ENCODE measurements at regions of chr6 and their contacts with region 1.

Region 1: DNA sequence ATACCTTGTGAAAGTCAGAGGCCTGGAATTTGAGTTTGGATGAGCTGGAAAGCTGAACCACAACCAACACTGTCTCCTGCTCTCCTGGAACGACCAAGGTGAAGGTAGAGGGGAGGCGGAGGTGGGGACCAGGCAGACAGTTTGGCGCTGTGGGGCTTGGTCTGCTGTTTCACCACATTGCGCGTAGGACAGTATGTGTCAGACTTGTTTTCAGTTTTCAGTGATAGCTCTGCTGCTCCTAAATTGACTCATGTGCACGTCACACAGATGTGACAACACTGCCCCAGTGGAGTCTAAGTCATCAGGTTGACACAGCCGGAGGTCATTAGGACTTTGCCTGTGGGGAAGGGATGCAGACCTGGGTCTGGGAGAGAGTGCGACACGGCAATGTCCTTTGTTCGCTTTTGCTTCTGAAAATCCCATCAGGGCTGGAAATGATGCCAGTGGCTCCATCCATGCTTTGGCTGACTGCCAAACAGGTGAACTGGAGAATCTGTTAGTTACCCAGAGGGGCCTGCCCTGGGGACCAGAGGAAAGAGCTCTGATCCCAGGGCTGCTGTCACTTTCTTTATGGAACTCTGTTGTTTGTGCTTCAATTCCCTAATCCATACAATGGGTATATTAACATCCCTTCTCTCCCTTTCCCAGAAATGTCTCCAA is 255.5 kb downstream of the CDC5L start:
- DNase-seq: peak; percentile 88
- H3K4me3 Mint-ChIP-seq: peak overlapping the region; percentile 33
- H3K27ac Mint-ChIP-seq: peak overlapping the region; percentile 96
- H3K4me1 Mint-ChIP-seq: peaks cover 39% of the 10 kb centered on the region
- H3K27me3 Mint-ChIP-seq: no peaks in the 10 kb centered on the region

Region 2: DNA sequence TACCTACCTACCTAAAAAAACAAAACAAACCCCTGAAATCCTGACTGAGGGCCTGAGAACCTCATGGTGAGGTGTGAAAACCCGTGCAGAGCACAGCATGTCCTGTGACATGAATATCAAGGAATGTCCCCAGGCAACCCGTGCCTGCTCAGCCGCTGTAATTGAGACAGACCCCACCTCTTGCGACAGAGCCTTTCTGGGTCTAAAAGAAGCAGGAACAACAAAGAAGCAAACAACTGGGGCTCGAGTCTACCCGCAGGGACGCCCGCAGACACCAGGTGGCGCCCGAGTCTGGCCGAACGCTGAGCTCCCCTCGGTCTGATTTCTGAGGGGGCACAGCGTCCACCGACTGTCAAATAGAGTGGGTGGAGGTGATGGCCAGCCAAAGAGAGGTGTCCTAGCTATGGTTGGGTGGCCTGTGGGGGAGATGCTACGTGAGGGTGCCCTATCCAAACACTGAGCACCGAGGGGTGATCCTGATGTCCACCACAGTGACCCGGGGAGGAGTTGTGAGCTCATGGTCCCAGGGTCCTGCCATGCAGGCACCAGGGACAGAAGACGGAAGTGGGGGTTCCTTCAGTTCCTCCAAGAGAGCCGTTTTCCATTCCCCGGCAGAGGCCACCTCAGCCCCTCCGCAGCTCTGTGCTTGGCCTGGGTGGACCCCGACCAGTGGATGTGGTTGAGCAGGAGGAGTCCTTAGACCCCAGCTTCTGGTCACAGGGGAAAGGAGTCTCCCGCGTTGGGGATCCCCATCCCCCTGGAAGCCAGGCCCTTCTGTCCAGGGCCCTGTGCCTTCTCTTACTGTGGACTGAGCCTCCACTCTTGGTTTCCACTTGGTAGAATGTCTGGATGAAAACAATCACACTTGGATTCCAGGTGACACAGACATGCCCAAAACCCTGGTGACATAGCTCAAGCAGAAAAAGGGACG is 12.7 kb after region 1 on chr6:
- CTCF ChIA-PET with region 1: interaction called, 25 read pairs
- POLR2A ChIA-PET with region 1: interaction called, 12 read pairs
- intact Hi-C with region 1: no loop called
- DNase-seq: peak; percentile 85
- H3K4me3 Mint-ChIP-seq: peak overlapping the region; percentile 24
- H3K27ac Mint-ChIP-seq: peak overlapping the region; percentile 76
- H3K4me1 Mint-ChIP-seq: peaks cover 9% of the 10 kb centered on the region
- H3K27me3 Mint-ChIP-seq: no peaks in the 10 kb centered on the region

Region 3: GRCh38 chr6:44925100-44925739 is 282.2 kb after region 1 on chr6:
- CTCF ChIA-PET with region 1: no interaction called
- POLR2A ChIA-PET with region 1: no interaction called
- intact Hi-C with region 1: loop called (anchors 5 kb)
- DNase-seq: no peak
- H3K4me3 Mint-ChIP-seq: no peak overlapping the region
- H3K27ac Mint-ChIP-seq: peak overlapping the region; percentile 38
- H3K4me1 Mint-ChIP-seq: peaks cover 47% of the 10 kb centered on the region
- H3K27me3 Mint-ChIP-seq: no peaks in the 10 kb centered on the region

Region 4: GRCh38 chr6:45371924-45372573 is 729.0 kb after region 1 on chr6:
- CTCF ChIA-PET with region 1: no interaction called
- POLR2A ChIA-PET with region 1: no interaction called
- intact Hi-C with region 1: loop called (anchors 2 kb)
- DNase-seq: no peak
- H3K4me3 Mint-ChIP-seq: no peak overlapping the region
- H3K27ac Mint-ChIP-seq: peak overlapping the region; percentile 18
- H3K4me1 Mint-ChIP-seq: peaks cover 37% of the 10 kb centered on the region
- H3K27me3 Mint-ChIP-seq: no peaks in the 10 kb centered on the region

Region 5: DNA sequence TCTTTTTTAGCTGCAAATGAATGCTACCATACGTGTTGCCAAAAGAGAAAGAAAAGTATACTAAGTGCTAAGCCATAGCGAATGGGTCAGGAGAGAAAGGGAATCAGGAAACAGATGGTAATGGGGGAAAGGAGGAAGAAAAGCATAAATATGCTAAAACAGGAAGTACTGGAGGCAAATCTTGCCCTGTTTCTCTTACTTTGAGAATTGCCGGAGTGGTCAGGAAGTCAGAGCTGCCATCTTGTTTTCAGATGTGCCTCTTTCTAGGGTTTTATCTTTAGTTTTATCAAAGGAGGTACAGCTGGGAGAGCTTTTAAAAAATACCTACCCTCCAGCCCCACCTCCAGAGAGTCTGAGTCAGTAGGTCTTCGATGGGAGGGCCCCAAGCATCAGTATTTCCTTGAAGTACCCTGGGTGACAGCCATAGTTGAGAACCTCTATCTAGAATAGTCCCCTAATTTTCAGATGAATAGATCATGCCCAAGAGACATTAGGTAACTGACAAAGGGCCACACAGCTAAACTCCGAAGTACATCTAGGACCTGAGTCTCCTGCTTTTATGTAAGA is 1179.3 kb after region 1 on chr6:
- CTCF ChIA-PET with region 1: no interaction called
- POLR2A ChIA-PET with region 1: no interaction called
- intact Hi-C with region 1: loop called (anchors 5 kb)
- DNase-seq: peak; percentile 67
- H3K4me3 Mint-ChIP-seq: peak overlapping the region; percentile 47
- H3K27ac Mint-ChIP-seq: peak overlapping the region; percentile 89
- H3K4me1 Mint-ChIP-seq: peaks cover 50% of the 10 kb centered on the region
- H3K27me3 Mint-ChIP-seq: peaks cover 3% of the 10 kb centered on the region